K562 (cell line): ENCODE measurements at regions of chr17 and their contacts with region 1.

Region 1: DNA sequence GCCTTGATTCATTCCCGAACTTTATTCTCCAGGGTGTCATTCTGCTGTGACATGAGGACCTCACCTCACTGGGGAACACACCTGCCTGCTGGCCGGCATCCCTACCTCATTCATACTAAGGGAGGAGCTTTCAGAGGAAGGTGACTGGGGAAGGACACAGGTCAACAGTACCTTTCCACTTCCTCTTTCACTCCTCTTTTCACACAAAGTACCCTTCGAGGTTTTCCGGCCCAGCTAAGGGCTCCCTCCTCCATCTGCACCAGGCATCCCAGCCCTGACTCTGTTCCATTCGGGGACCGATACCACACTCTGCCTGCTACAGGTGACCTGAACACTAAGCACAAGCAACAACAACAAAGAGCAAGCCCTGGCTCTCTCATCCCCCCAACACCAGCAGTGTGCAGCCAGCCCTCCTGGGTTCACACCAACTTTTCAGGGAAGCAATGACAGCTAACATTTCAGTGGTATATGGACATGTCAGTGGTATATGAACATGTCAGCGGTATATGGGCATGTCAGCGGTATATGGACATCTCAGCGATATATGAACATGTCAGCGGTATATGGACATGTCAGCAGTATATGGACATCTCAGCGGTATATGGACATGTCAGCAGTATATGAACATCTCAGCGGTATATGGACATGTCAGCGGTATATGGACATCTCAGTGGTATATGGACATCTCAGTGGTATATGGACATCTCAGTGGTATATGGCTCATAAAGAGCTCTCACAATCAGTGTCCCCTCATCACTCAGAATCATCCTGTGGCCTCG is 16.0 kb downstream of the TRIM25 start:
- DNase-seq: no peak
- ATAC-seq: no peak
- H3K4me3 ChIP-seq: no peak overlapping the region
- H3K27ac ChIP-seq: no peak overlapping the region
- H3K4me1 ChIP-seq: peaks cover 0 to 4% of the 10 kb centered on the region in 2 experiments; a peak in 1 of 5 replicates
- H3K27me3 ChIP-seq: no peaks in the 10 kb centered on the region
- CTCF ChIP-seq: no peak
- EP300 ChIP-seq: no peak
- POLR2A ChIP-seq: no peak
- RAD21 ChIP-seq: no peak

Region 2: GRCh38 chr17:56851008-56851407 is 46.8 kb before region 1 on chr17:
- CTCF ChIA-PET with region 1: no interaction called
- POLR2A ChIA-PET with region 1: no interaction called
- in situ Hi-C with region 1: no loop called
- intact Hi-C with region 1: no loop called
- DNase-seq: no peak
- ATAC-seq: no peak
- H3K4me3 ChIP-seq: no peak overlapping the region
- H3K27ac ChIP-seq: no peak overlapping the region
- H3K4me1 ChIP-seq: no peaks in the 10 kb centered on the region
- H3K27me3 ChIP-seq: no peaks in the 10 kb centered on the region
- CTCF ChIP-seq: no peak
- EP300 ChIP-seq: no peak
- POLR2A ChIP-seq: no peak
- RAD21 ChIP-seq: no peak

Region 3: GRCh38 chr17:56908001-56908542 is 10.2 kb after region 1 on chr17:
- CTCF ChIA-PET with region 1: no interaction called
- POLR2A ChIA-PET with region 1: interaction called, 13 read pairs
- in situ Hi-C with region 1: no loop called
- intact Hi-C with region 1: no loop called
- DNase-seq: peak in 2 of 4 experiments; percentile 29 to 56
- ATAC-seq: no peak
- H3K4me3 ChIP-seq: no peak overlapping the region
- H3K27ac ChIP-seq: no peak overlapping the region
- H3K4me1 ChIP-seq: peaks cover 33 to 37% of the 10 kb centered on the region in 2 experiments
- H3K27me3 ChIP-seq: no peaks in the 10 kb centered on the region
- CTCF ChIP-seq: no peak
- EP300 ChIP-seq: no peak
- POLR2A ChIP-seq: no peak
- RAD21 ChIP-seq: no peak

Region 4: DNA sequence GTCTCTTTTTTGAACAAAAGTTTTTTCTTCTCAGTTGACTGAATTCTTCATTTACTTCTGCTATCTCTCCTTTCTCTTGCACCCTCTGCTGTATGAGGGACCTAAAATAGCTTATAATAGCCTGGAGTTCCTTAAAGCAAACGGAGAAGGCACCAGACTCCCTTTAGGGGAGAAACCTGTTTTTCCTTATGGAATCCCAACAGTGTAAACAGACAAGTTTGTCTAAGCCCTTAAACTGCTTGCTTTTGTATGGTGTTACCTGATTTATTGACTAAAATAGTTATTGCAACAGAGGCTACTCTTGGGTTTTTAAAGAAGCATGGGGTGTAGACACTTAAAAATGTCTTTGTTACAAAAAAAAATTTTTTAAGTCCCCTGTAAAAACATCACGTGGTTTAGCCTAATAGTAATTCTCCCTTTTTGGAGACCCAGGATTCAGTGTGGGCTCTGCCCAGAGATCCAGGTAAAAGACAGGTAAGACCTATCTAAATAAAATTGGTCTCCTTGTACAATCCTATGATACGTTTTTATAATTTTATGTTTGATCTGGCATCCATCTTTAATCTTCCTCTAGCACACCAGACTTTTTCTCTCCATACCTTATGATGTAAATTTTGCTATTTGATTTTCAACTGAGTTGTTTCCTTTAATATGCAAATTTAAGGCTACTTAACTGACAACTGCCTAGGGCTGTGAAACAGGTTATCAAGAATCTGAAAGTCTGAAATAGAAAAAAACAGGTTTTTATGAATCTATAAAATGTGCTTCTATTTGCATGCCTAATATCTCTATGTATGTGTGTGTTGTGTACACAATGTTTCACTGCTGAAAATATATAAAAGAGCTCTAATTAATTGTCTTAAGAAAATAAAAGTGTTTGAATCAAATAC is 29.1 kb after region 1 on chr17:
- CTCF ChIA-PET with region 1: no interaction called
- POLR2A ChIA-PET with region 1: no interaction called
- in situ Hi-C with region 1: no loop called
- intact Hi-C with region 1: no loop called
- DNase-seq: no peak
- ATAC-seq: no peak
- H3K4me3 ChIP-seq: no peak overlapping the region
- H3K27ac ChIP-seq: no peak overlapping the region
- H3K4me1 ChIP-seq: no peaks in the 10 kb centered on the region; a peak in 1 of 5 replicates
- H3K27me3 ChIP-seq: no peaks in the 10 kb centered on the region
- CTCF ChIP-seq: peak in 1 of 3 experiments; percentile 8; a peak in 1 of 6 replicates
- EP300 ChIP-seq: no peak
- POLR2A ChIP-seq: no peak
- RAD21 ChIP-seq: no peak

Region 5: GRCh38 chr17:57016747-57017082 is 118.9 kb after region 1 on chr17:
- CTCF ChIA-PET with region 1: no interaction called
- POLR2A ChIA-PET with region 1: no interaction called
- in situ Hi-C with region 1: no loop called
- intact Hi-C with region 1: no loop called
- DNase-seq: no peak
- ATAC-seq: no peak
- H3K4me3 ChIP-seq: no peak overlapping the region
- H3K27ac ChIP-seq: no peak overlapping the region
- H3K4me1 ChIP-seq: peaks cover 6 to 19% of the 10 kb centered on the region in 2 experiments; a peak in 3 of 5 replicates
- H3K27me3 ChIP-seq: peaks cover 0 to under 1% of the 10 kb centered on the region in 2 experiments; a peak in 1 of 5 replicates
- CTCF ChIP-seq: no peak
- EP300 ChIP-seq: no peak
- POLR2A ChIP-seq: no peak
- RAD21 ChIP-seq: no peak

Region 6: DNA sequence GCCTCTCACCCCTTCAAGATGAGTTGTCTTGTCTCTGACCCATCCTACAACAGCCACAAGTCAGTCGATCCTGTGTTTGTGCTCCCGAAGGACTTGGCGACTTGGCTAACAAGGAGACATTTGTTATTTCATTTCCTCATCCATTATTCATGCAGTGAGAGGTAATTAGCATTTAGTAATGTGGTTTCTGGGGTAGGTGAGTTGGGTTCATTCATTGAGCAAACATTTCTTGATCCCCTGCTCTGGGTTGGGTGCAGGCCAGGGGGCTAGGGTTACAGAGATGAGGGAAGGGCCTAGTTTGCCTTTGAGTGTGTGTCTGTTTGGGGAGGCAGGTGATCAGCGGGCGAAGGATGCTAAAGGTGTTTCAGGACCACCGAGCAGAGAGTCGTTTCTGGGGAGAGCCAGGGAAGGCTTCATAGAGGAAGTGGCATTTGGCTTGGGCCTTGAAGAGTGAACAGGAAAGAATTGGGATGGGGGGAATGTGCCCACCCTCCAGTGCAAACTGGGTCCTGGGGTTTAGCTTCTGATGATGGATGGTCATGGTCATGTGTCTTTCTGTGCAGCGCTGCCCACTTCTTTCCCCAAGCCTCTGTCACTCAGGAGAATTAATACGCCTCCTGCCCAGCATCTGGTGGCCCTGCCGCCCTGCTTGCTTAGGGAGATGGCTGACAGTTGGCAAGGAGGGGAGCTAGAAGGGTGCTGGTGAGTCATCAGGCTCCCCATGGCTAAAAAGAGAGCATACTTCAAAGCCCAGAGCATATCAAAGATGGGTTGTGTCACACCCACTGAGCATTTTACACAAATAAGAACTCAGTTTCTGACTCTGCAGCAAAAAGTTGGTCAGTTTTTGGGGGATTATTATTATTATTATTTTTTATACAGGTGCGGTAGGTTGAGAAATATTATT is 397.0 kb after region 1 on chr17:
- CTCF ChIA-PET with region 1: no interaction called
- POLR2A ChIA-PET with region 1: no interaction called
- in situ Hi-C with region 1: no loop called
- intact Hi-C with region 1: no loop called
- DNase-seq: peak in 3 of 4 experiments; percentile 33 to 57 (median 38)
- ATAC-seq: 0 out of 3 replicates have a peak, but pooled peaks have one; percentile 37
- H3K4me3 ChIP-seq: no peak overlapping the region
- H3K27ac ChIP-seq: no peak overlapping the region
- H3K4me1 ChIP-seq: peaks cover 0 to 9% of the 10 kb centered on the region in 2 experiments; a peak in 2 of 5 replicates
- H3K27me3 ChIP-seq: no peaks in the 10 kb centered on the region
- CTCF ChIP-seq: no peak
- EP300 ChIP-seq: no peak
- POLR2A ChIP-seq: no peak
- RAD21 ChIP-seq: no peak